MCF 10A (cell line): ENCODE measurements at regions of chr17 and their contacts with region 1.

Region 1: DNA sequence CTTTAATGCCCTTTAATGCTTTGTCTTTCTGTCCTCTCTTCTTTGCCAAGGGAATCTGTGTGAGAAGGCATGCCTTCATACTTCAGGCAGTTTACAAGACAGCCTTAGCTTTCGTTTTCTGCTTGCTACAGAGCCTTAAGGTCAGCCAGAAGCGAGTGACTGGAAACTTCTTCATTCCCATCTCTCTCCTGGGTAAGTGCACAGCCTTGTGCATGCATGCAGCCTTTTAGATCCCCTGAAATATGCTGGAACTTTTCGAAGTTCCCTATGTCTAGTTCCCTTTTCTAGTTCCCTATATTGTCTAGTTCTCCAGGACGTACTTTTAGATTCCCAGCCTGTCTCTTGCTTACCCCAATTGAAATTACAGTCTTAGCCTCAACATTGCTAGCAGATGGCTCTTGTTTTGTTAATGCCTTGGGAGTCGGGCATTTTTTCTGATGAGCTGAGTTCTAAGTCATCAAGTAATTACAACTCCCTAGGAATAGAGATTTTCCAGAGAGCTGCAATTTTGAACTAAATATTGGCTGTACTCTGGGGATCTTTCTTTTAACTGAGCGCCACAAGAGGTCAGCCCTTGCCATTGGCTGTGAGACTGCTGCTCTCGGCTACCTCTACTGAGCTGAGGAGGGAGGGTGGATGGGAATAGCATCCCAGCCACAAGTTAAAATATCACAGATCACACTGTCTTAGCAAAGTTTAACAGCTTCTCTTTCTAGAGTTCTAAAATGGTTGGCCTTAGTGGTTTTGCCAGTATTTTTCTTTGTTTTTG is 22.7 kb upstream of the PPM1D start:
- DNase-seq: peak; percentile 11
- H3K4me3 Mint-ChIP-seq: peak overlapping the region; percentile 48
- H3K27ac Mint-ChIP-seq: peak overlapping the region; percentile 25
- H3K4me1 Mint-ChIP-seq: peaks cover 6% of the 10 kb centered on the region
- H3K27me3 Mint-ChIP-seq: no peaks in the 10 kb centered on the region
- CTCF ChIP-seq: no peak

Region 2: GRCh38 chr17:60451071-60451470 is 126.3 kb before region 1 on chr17:
- CTCF ChIA-PET with region 1: interaction called, 3 read pairs
- POLR2A ChIA-PET with region 1: no interaction called
- intact Hi-C with region 1: loop called (anchors 5 kb)
- DNase-seq: no peak
- H3K4me3 Mint-ChIP-seq: no peak overlapping the region
- H3K27ac Mint-ChIP-seq: no peak overlapping the region
- H3K4me1 Mint-ChIP-seq: no peaks in the 10 kb centered on the region
- H3K27me3 Mint-ChIP-seq: no peaks in the 10 kb centered on the region
- CTCF ChIP-seq: no peak

Region 3: DNA sequence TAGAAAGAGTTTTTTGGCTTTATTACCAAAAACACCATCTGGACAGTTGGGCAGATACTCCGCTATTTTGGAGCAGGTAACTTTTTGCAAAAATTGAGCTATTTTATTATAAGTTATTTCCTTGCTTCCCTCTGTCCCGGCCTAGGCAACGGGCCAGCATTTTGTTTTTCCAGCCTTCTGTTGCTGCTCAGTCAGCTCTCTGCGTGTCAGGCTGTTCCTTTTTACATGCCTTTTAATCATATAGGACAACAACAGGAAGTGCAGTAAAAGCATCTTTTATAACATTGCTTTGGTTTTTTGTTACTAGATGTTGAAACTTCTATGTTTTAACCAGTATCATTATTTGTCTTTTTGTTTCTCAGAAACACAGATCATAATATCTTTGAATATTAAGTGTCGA is 53.0 kb after region 1 on chr17:
- CTCF ChIA-PET with region 1: no interaction called
- POLR2A ChIA-PET with region 1: no interaction called
- intact Hi-C with region 1: loop called (anchors 10 kb)
- DNase-seq: no peak
- H3K4me3 Mint-ChIP-seq: no peak overlapping the region
- H3K27ac Mint-ChIP-seq: no peak overlapping the region
- H3K4me1 Mint-ChIP-seq: no peaks in the 10 kb centered on the region
- H3K27me3 Mint-ChIP-seq: no peaks in the 10 kb centered on the region
- CTCF ChIP-seq: no peak

Region 4: DNA sequence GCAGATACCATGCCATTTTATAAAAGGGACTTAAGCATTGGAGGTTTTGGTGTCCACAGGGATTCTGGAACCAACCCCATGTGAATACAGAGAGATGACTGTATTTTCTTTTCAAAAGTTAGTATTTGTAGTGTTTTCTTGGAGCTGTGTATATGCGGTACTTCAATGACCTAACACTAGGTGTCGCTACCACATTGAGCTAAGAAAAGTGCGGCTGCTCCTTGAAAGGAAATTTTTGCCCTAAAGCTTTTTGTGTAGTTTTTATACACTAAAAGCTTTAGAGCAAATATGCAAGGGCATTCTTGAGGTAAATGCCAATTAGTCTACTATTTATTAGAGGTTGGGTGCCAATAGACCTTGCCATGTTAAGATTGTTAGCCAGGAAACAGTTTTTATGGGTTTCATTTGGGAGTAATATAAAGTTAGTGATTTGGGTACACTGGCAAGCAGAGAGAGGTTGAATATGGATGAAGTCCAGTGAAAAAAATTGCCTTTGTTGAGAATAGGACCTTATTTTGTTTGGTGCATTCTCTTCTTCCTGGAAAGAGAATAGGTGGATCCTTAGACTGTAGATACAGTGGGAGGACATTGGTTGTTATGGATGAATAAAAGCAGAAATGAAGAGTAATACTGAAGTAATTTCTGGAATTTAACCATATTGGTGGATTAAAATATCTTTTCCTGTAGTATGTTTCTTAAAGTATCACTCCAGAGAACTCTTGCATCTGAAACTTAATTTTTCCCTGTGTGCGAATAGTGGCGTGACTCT is 143.6 kb after region 1 on chr17:
- CTCF ChIA-PET with region 1: no interaction called
- POLR2A ChIA-PET with region 1: no interaction called
- intact Hi-C with region 1: no loop called
- DNase-seq: peak; percentile 62
- H3K4me3 Mint-ChIP-seq: no peak overlapping the region
- H3K27ac Mint-ChIP-seq: no peak overlapping the region
- H3K4me1 Mint-ChIP-seq: peaks cover 5% of the 10 kb centered on the region
- H3K27me3 Mint-ChIP-seq: no peaks in the 10 kb centered on the region
- CTCF ChIP-seq: peak; percentile 74